Activated CD8-positive, alpha-beta T cell treated with anti-CD3 and anti-CD28 coated beads for 36 hours (primary cell): ENCODE measurements at regions of chr18 and their contacts with region 1.

Region 1: DNA sequence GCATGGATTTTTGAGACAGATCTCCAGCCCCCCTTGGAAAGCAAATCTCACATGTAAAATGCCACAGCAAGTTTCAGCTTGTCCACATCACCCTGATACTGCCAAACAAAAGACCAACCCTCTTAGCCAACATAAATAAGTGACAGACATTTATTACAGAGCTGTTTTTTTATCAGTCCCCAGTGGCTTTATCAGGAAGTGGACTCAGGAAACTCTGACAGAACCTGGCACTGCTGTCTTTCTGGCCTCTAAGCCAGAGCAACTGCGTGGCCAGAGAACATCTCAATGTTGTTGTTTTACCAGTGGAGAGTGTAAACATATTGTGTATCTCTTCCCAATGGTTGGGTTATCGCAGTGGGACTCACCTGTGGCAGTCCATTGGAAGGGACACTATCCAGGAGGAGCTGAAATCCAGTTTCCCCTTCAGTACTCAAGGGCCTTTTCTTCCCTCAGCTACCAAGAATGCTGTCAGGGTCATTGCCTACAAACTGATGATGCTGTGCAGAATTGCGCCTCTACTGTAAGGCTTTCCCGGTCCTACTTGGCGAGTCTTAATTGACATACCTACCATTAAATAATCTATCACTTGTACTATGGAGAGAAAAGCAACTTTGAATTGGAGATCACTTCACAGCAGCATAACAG is 22.0 kb downstream of the SLC14A1 start:
- DNase-seq: no peak
- ATAC-seq: no peak
- H3K4me3 Mint-ChIP-seq: no peak overlapping the region
- H3K27ac Mint-ChIP-seq: no peak overlapping the region
- H3K4me1 Mint-ChIP-seq: no peaks in the 10 kb centered on the region
- H3K27me3 Mint-ChIP-seq: no peaks in the 10 kb centered on the region
- CTCF ChIP-seq: no peak

Region 2: DNA sequence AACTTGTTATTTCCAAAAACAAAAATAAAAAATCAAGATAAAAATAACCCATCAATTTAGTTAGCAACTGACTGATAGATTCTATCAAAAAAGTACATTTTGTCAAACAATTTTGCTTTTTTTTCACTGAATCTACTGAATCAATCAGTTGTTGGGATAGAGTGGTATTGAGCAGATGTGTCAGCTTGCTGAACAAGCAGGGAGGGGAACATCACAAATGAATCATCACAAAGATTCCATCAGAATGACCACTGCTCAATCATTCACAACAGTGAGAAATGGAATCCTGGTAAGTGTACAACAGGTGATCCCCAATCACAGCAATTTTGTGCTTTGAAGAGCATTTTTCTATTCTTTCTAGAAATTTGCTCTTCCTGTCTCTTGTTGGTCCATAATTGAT is 143.0 kb before region 1 on chr18:
- CTCF ChIA-PET with region 1: no interaction called
- POLR2A ChIA-PET with region 1: no interaction called
- intact Hi-C with region 1: no loop called
- DNase-seq: no peak
- ATAC-seq: no peak
- H3K4me3 Mint-ChIP-seq: no peak overlapping the region
- H3K27ac Mint-ChIP-seq: no peak overlapping the region
- H3K4me1 Mint-ChIP-seq: no peaks in the 10 kb centered on the region
- H3K27me3 Mint-ChIP-seq: peaks cover 4% of the 10 kb centered on the region
- CTCF ChIP-seq: no peak

Region 3: GRCh38 chr18:45722899-45723298 is 23.0 kb before region 1 on chr18:
- CTCF ChIA-PET with region 1: interaction called, 21 read pairs
- POLR2A ChIA-PET with region 1: no interaction called
- intact Hi-C with region 1: no loop called
- DNase-seq: peak; percentile 85
- ATAC-seq: peak; percentile 100
- H3K4me3 Mint-ChIP-seq: no peak overlapping the region
- H3K27ac Mint-ChIP-seq: no peak overlapping the region
- H3K4me1 Mint-ChIP-seq: no peaks in the 10 kb centered on the region
- H3K27me3 Mint-ChIP-seq: peaks cover 6% of the 10 kb centered on the region
- CTCF ChIP-seq: peak; percentile 80

Region 4: GRCh38 chr18:45733535-45733934 is 12.4 kb before region 1 on chr18:
- CTCF ChIA-PET with region 1: no interaction called
- POLR2A ChIA-PET with region 1: no interaction called
- intact Hi-C with region 1: no loop called
- DNase-seq: peak; percentile 2
- ATAC-seq: no peak
- H3K4me3 Mint-ChIP-seq: no peak overlapping the region
- H3K27ac Mint-ChIP-seq: no peak overlapping the region
- H3K4me1 Mint-ChIP-seq: no peaks in the 10 kb centered on the region
- H3K27me3 Mint-ChIP-seq: no peaks in the 10 kb centered on the region
- CTCF ChIP-seq: no peak